ENCODE measurements at regions of chr3 and their contacts with region 1.

Region 1: DNA sequence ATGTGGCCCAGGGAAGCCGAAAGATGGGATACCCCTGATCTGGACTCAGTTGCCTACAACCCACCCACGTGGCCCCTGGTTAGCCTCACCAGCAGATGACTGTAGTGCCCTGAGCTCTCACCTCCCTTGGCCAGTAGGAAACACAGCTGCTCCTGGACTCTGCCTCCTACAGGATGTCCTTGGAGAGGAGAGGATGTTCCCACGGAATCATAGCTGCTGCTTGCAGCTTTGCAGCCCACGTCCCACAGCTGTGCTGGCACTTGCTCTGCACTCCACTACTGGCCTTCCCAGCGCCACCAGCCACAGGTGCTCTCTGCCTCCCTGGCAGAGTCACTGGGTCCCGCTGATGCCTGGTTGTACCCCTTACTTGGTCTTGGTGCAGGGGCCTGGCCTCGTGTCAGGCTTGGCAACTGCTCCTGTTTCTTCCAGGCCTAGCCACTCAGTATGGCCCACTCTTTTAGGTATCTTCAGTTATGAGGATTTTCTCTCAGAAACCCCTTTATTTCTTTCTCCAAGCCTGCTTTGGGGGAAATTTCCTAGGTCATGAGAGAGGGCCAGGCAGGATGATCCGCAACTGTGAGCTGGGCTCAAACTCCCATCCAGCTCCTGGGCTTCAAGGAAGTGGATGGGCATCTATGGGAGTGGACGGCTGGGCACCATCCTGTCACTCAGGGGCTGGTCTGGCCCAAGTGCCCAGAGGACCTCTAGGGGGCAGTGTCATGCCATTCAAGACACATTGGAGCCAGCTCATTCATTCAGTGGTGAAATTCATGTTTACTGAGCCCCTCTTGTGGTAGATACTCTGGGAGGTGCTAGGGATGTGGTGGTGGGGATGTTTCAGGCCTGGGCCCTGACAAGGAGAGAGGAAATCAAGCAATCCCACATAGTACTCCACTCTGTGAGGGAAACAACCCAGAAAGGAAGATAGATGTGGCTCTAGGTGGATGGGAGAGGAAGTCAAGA is 16.2 kb upstream of the VILL start:
- DNase-seq: peak; percentile 80
- CTCF ChIP-seq: peak; percentile 93

Region 2: DNA sequence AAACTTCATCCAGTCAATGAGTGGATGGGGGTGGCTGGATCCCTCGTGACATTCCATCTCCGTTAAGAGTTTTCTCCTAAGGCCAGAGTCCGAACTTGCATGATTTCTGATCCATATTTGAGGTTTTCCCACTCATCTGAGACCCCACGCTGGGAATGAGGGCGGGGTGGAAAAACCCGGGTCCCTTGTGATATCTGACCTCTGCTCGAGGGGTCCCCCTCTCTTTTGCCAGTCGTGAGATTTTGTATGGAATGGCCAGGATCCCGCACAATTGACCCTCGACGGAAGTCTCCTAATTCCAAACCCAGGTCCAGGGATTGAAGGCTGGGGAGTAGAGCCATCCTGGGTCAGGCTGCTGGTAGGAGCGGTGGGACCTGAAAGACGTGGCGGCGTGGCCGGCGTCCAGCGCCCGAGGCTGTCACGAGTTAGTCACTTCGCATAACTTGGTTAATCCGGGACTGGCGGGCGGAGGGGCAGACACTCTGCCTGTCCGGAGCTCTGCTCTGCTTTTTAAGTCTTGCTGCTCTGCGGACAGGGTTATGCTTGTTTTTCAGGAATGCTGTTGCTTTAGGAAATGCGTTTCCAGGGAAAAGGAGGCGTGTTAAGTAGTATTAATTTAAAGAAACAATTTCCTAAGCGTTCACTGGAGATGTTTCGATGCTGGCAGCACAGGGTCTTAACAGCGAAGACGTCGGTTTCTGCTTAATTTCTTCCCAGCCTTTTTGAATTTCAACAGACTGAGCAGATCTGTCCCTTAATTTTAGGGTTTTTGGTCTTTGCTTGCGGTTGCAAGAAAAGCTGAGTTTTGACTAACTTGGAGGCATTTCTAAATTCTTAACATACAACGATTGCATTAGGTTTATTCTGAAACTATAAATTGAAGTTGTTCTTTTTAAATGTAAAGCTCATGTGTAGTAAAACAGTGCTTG is 730.3 kb before region 1 on chr3:
- CTCF ChIA-PET with region 1: no interaction called
- POLR2A ChIA-PET with region 1: no interaction called
- DNase-seq: peak; percentile 62
- CTCF ChIP-seq: no peak

Region 3: DNA sequence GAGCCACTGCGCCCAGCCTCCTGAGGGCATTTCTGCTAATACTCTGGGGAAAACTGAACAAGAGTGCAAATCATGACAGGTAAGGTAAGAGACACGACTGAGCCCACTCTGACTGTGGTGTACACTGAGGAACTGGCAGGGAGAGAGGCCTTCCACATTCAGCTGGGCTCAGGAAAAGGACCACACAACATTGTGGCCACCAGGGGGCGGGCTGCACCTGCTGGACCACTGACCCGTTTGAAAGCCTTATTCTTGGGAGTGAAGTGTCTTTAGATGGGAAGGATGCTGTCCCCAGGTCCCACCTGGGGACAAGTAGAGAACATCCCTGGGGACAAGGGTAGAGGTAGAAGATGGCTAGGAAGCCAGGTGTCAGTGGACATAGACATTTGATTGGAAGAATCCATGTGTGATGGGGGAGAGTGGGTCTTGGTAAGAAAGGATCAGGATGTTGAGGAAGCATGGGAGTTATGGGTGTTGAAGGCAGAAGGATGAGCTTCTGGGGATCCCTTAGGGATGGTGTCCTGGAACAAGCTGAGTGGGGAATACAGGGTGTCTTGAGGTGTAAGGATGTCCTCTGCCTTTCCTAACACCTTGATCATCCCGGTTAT is 118.9 kb before region 1 on chr3:
- CTCF ChIA-PET with region 1: interaction called, 331 read pairs
- POLR2A ChIA-PET with region 1: no interaction called
- DNase-seq: peak; percentile 75
- CTCF ChIP-seq: peak; percentile 85

Region 4: GRCh38 chr3:37986479-37987314 is 12.3 kb after region 1 on chr3:
- CTCF ChIA-PET with region 1: interaction called, 39 read pairs
- POLR2A ChIA-PET with region 1: no interaction called
- DNase-seq: no peak
- CTCF ChIP-seq: no peak

Region 5: GRCh38 chr3:38039101-38039898 is 64.9 kb after region 1 on chr3 and contains the start of gene DLEC1:
- CTCF ChIA-PET with region 1: interaction called, 11 read pairs
- POLR2A ChIA-PET with region 1: no interaction called
- DNase-seq: peak; percentile 85
- CTCF ChIP-seq: no peak

Region 6: DNA sequence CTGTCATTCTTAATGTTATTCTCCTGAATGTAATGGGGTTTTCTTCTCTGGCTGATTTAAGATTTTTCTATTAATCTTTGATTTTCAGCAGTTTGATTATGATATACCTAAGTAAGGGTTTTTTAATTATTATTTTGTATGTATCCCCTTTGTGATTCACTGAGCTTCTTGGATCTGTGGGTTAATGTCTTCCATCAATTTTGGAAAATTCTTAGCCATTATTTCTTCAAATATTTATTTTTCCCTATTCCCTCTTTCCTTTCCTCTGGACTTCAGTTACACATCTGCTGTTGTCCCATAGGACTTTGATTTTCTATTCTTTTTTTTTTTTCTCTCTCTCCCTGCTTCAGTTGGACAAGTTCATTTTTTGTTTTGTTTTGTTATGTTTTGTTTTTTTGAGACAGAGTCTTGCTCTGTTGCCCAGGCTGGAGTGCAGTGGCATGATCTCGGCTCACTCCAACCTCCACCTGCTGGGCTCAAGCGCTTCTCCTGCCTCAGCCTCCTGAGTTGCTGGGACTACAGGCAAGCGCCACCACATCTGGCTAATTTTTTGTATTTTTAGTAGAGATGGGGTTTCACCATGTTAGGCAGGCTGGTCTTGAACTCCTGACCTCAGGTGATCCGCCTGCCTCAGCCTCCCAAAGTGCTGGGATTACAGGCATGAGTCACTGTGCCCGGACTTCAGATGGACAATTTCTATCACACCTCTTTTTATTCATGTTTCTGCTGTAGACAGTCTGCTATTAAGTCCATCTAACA is 412.8 kb after region 1 on chr3:
- CTCF ChIA-PET with region 1: no interaction called
- POLR2A ChIA-PET with region 1: no interaction called
- DNase-seq: no peak
- CTCF ChIP-seq: no peak

Region 7: DNA sequence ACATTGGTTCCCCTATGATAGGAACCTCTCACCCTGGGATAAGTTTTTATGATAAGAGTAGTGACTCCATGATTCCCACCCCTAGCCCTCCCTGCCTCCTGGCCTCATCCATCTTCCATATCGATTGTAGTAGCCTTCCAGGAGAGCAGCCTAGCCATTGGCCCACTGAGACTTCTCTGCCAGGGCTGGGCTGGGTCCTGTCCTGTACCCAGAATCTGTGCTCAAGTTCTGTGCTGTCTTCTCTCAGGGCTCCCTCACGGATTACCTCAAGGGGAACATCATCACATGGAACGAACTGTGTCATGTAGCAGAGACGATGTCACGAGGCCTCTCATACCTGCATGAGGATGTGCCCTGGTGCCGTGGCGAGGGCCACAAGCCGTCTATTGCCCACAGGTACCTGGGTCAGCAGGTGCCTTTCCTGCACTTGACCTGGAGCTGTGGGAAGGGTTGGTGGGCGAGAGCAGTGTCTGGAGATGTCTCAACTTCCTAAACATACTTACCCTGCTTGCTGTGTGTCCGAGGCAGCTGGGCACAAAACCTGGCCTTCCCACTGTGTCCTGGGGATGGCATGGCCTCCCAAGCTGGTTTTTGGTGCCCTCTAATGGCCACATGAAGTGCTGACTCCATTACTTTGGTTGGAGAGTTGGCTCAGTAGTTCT is 505.2 kb after region 1 on chr3:
- CTCF ChIA-PET with region 1: interaction called, 16 read pairs
- POLR2A ChIA-PET with region 1: no interaction called
- DNase-seq: peak; percentile 79
- CTCF ChIP-seq: peak; percentile 91

Measured in GM10248 (cell line).